GM12878 (cell line): ENCODE measurements at regions of chr20 and their contacts with region 1.

Region 1: GRCh38 chr20:13546497-13547131 is 92.1 kb downstream of the TASP1 start:
- DNase-seq: peak; percentile 17
- ATAC-seq: peak; percentile 95
- H3K4me3 ChIP-seq: no peak overlapping the region
- H3K27ac ChIP-seq: no peak overlapping the region
- H3K4me1 ChIP-seq: no peaks in the 10 kb centered on the region
- H3K27me3 ChIP-seq: no peaks in the 10 kb centered on the region
- CTCF ChIP-seq: peak; percentile 80 to 84 (median 81)
- EP300 ChIP-seq: no peak
- POLR2A ChIP-seq: no peak
- RAD21 ChIP-seq: peak; percentile 85

Region 2: DNA sequence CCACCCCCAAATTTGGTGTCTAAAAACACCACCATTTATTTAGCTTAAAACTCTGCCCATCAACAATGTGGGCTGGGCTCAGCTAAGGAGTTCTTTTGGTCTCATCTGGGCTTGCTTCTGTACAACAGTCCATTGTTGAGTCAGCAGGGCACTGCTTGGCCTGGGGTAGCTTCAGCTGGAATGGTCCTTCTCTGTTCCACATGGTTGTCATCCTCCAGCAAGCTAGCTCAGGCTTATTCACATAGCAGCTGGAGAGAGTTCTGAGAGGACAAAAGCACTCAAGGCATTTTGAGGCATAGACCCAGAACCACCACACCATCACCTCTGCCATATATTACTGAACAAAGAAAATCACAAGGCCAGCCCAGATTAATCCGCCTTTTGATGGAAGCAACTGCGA is 421.1 kb before region 1 on chr20:
- CTCF ChIA-PET with region 1: interaction called, 172 read pairs
- POLR2A ChIA-PET with region 1: interaction called, 7 read pairs
- RAD21 ChIA-PET with region 1: interaction called, 136 read pairs
- SMC1A ChIA-PET with region 1: interaction called, 67 read pairs
- in situ Hi-C with region 1: no loop called
- intact Hi-C with region 1: no loop called
- DNase-seq: no peak
- ATAC-seq: no peak
- H3K4me3 ChIP-seq: no peak overlapping the region
- H3K27ac ChIP-seq: no peak overlapping the region
- H3K4me1 ChIP-seq: no peaks in the 10 kb centered on the region
- H3K27me3 ChIP-seq: no peaks in the 10 kb centered on the region
- CTCF ChIP-seq: no peak
- EP300 ChIP-seq: no peak
- POLR2A ChIP-seq: no peak
- RAD21 ChIP-seq: no peak

Region 3: DNA sequence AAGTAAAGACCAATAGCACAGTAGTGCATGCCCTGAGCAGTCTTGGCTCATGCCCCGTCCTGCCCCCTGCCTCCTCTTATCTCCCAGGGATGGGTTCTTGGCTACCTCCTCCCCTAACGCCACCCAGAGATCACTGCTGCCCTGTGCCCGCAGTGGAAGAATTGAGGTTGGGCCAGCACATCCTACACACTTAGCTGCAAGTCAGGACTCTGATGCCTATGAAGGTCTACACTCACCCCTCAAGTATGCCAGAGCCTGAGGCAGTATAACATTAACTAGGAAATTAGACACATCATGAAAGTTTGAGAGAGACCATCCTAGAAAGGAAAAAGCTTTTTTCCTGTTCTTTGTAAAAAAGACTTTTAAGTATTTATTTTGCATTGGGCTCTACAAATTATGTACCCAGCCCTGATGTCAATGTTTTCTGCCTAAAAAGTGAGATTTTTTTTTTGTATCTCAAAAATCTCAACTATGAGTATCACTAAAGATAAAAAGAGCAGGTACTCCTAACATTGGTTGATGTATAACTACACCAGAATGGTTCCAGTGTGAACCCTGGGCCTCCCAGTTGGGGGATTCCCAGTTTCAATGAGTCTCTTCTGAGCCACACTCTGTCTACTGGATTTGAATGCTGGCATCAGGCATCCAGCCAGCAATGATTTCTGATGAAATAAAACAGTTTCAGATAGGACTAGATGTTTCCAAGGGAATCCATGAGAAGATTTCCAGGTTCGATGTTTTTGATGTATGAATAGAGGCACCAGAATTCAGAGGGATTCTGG is 210.1 kb before region 1 on chr20:
- CTCF ChIA-PET with region 1: interaction called, 21 read pairs
- POLR2A ChIA-PET with region 1: no interaction called
- RAD21 ChIA-PET with region 1: interaction called, 12 read pairs
- SMC1A ChIA-PET with region 1: interaction called, 19 read pairs
- in situ Hi-C with region 1: no loop called
- intact Hi-C with region 1: no loop called
- DNase-seq: no peak
- ATAC-seq: peak; percentile 84
- H3K4me3 ChIP-seq: no peak overlapping the region
- H3K27ac ChIP-seq: no peak overlapping the region
- H3K4me1 ChIP-seq: no peaks in the 10 kb centered on the region; the same call in 1 of the 2 replicates
- H3K27me3 ChIP-seq: no peaks in the 10 kb centered on the region
- CTCF ChIP-seq: no peak
- EP300 ChIP-seq: no peak
- POLR2A ChIP-seq: no peak
- RAD21 ChIP-seq: no peak

Region 4: GRCh38 chr20:13468166-13468565 is 78.4 kb before region 1 on chr20:
- CTCF ChIA-PET with region 1: interaction called, 13 read pairs
- POLR2A ChIA-PET with region 1: no interaction called
- RAD21 ChIA-PET with region 1: no interaction called
- SMC1A ChIA-PET with region 1: interaction called, 5 read pairs
- in situ Hi-C with region 1: no loop called
- intact Hi-C with region 1: no loop called
- DNase-seq: no peak
- ATAC-seq: no peak
- H3K4me3 ChIP-seq: no peak overlapping the region
- H3K27ac ChIP-seq: no peak overlapping the region
- H3K4me1 ChIP-seq: no peaks in the 10 kb centered on the region
- H3K27me3 ChIP-seq: no peaks in the 10 kb centered on the region
- CTCF ChIP-seq: no peak
- EP300 ChIP-seq: no peak
- POLR2A ChIP-seq: no peak
- RAD21 ChIP-seq: no peak

Region 5: GRCh38 chr20:13574071-13574470 is 27.5 kb after region 1 on chr20:
- CTCF ChIA-PET with region 1: interaction called, 21 read pairs
- POLR2A ChIA-PET with region 1: interaction called, 3 read pairs
- RAD21 ChIA-PET with region 1: interaction called, 6 read pairs
- SMC1A ChIA-PET with region 1: interaction called, 7 read pairs
- in situ Hi-C with region 1: no loop called
- intact Hi-C with region 1: no loop called
- DNase-seq: no peak
- ATAC-seq: no peak
- H3K4me3 ChIP-seq: no peak overlapping the region
- H3K27ac ChIP-seq: no peak overlapping the region
- H3K4me1 ChIP-seq: no peaks in the 10 kb centered on the region
- H3K27me3 ChIP-seq: no peaks in the 10 kb centered on the region
- CTCF ChIP-seq: no peak
- EP300 ChIP-seq: no peak
- POLR2A ChIP-seq: no peak
- RAD21 ChIP-seq: no peak

Region 6: GRCh38 chr20:13784893-13785715 is 238.5 kb after region 1 on chr20 and contains the starts of genes ESF1 and NDUFAF5:
- CTCF ChIA-PET with region 1: interaction called, 14 read pairs
- POLR2A ChIA-PET with region 1: no interaction called
- RAD21 ChIA-PET with region 1: interaction called, 15 read pairs
- SMC1A ChIA-PET with region 1: interaction called, 13 read pairs
- in situ Hi-C with region 1: no loop called
- intact Hi-C with region 1: no loop called
- DNase-seq: peak; percentile 95
- ATAC-seq: peak; percentile 93
- H3K4me3 ChIP-seq: peak within 1 kb of the TSS; percentile 99
- H3K27ac ChIP-seq: peak within 1 kb of the TSS; percentile 80
- H3K4me1 ChIP-seq: peaks cover 5% of the 10 kb centered on the region
- H3K27me3 ChIP-seq: no peaks in the 10 kb centered on the region
- CTCF ChIP-seq: no peak
- EP300 ChIP-seq: no peak
- POLR2A ChIP-seq: peak; percentile 40
- RAD21 ChIP-seq: no peak
- polyA plus RNA-seq, gene ESF1: 20.2 to 27.6 TPM
- polyA plus RNA-seq, gene NDUFAF5: 24.7 to 27.5 TPM

Region 7: DNA sequence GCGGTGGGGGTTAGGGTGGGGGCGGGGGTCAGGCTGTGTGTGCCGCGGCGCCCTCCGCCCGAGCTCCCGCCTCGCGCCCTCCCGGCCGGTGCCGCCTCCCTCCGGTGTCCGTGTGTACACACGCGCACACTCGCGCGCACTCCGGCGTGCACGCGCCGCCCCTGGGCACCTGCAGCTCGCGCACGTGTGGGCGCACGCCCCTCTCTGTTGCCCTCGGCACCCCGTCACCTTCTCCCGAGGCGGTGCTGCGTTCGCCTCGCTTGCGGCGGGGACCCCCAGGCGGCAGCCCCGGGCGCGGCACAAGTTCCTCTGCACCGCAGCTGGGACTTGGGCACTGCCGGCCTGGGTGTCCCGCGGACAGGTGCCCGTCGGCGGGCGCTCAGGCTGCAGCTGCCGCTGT is 449.2 kb after region 1 on chr20:
- CTCF ChIA-PET with region 1: no interaction called
- POLR2A ChIA-PET with region 1: no interaction called
- RAD21 ChIA-PET with region 1: no interaction called
- SMC1A ChIA-PET with region 1: no interaction called
- in situ Hi-C with region 1: no loop called
- intact Hi-C with region 1: no loop called
- DNase-seq: no peak
- ATAC-seq: no peak
- H3K4me3 ChIP-seq: no peak overlapping the region
- H3K27ac ChIP-seq: no peak overlapping the region
- H3K4me1 ChIP-seq: no peaks in the 10 kb centered on the region
- H3K27me3 ChIP-seq: no peaks in the 10 kb centered on the region
- CTCF ChIP-seq: no peak
- EP300 ChIP-seq: no peak
- POLR2A ChIP-seq: no peak
- RAD21 ChIP-seq: no peak